Right ventricle myocardium superior (tissue), 1 donor: ENCODE measurements at regions of chr20 and their contacts with region 1.

Region 1: GRCh38 chr20:31859998-31860709 is 10.2 kb downstream of the DUSP15 start:
- DNase-seq: no peak
- ATAC-seq: peak; percentile 70

Region 2: DNA sequence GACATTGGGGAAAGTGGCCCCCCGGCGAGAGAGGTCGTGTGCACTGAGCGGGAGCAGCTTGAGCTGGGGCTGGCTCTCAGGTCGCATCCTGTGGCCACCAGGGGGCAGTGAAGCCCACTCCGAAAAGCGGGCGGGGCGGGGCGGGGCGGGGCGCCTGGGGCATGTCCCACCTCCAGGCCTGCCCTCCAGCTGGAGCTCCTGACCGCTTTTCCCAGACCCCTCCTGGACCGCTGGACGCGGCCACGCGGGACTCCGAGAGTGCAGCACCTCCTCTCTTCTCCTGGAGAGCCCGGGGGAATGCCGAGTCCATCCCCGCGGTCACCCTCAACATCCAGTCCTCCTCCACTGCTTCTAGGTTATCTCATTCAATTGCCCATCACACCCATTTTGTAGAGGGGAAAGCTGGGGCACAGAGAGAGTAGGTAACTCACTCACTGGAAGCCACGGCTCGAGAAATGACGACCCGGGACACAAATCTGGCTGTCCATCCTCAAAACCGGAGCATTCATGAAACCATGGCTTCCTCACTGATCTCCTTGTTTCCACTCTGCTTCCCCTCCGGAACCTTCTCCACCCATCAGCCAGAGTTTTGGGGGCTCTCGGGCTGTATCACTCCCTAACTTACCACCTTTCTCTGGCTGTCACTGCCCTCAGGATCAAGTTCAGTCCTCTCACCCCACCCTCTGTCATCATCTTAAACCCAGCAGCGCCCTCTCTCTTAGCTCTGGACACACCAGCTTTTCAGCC is 198.4 kb before region 1 on chr20:
- intact Hi-C with region 1: no loop called
- DNase-seq: peak; percentile 89
- ATAC-seq: peak; percentile 81

Region 3: DNA sequence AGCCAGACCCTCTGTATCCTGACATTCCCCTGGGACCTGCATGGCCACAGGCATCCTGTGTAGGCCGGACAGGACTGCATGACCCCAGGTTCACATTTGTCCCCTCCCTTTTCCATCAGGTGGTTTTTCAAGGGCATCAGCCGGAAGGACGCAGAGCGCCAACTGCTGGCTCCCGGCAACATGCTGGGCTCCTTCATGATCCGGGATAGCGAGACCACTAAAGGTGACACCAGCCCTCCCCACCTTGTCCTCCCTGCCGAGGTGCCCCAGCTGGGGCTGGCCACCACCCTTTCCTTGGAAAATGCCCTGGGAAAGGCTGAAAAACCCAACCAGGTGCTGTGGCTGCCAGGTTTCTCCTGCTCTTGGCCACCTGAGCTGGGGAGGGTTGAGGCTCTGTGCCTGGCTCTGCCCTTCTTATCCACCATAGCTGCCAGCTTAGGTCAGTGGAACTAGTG is 219.5 kb after region 1 on chr20:
- intact Hi-C with region 1: loop called (anchors 10 kb)
- DNase-seq: no peak
- ATAC-seq: no peak

Region 4: DNA sequence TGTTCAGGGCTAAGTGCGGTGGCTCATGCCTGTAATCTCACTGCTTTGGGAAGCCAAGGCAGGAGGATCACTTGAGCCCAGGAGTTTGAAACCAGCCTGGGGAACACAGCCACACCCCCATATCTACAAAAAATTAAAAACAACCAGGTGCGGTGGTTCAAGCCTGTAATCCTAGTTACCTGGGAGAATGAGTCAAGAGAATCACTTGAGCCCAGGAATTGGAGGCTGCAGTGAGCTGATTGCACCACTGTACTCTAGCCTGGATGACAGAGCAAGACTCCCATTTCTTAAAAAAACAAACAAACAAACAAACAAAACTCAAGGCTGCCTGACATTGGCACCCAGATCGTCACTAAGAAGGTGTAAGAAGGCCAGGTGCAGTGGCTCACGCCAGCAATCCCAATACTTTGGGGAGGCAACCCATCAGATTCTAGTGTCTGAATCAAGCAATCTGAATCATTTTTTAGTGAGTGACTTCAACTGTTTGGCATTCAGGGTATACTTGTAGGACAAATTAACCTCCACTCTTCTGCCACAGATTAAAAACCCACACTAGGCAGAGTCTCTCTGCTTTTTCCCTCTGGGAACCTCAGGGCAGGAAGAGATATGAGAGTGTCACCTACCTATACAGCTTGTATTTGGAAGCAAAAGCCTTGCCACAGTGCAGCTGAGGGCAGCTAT is 341.3 kb after region 1 on chr20:
- intact Hi-C with region 1: no loop called
- DNase-seq: no peak
- ATAC-seq: no peak